ENCODE measurements at regions of chr7 and their contacts with region 1.

Region 1: DNA sequence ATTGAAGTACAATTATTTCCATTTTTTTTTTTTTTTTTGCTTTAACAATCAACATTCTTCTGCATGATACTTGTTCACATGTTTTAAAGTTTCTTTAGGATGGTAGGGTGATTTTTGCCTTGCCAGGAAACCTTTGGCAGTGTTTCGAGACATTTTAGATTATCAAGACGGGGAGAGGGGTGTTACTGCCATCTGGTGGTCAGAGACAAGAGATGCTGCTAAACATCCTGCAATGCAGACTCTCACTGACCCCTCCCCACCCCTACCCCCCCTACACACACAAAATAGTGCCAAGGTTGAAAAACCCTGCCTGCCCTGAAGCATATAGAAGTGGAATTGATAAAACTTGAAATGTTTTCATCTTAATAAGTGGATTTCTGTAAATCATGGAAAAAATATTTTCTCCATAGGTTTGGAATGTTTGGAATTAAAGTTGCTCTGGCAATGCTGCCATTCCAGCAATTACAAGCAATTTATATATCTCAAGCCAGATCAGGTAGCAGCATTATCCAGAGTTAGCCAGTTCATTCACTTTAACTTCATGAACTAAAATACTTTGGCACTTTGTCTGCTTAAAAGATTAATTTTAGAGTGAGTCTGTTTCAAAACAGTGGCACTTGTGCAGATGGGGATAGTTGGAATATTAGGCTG is 62.1 kb downstream of the SDHAF3 start:
- DNase-seq: peak in 4 of 10 donors; percentile 19 to 38 (median 26)

Region 2: GRCh38 chr7:97104719-97105238 is 74.8 kb before region 1 on chr7:
- intact Hi-C with region 1: loop called (anchors 1 kb)
- DNase-seq: peak; percentile 38 to 96 (median 82)

Region 3: DNA sequence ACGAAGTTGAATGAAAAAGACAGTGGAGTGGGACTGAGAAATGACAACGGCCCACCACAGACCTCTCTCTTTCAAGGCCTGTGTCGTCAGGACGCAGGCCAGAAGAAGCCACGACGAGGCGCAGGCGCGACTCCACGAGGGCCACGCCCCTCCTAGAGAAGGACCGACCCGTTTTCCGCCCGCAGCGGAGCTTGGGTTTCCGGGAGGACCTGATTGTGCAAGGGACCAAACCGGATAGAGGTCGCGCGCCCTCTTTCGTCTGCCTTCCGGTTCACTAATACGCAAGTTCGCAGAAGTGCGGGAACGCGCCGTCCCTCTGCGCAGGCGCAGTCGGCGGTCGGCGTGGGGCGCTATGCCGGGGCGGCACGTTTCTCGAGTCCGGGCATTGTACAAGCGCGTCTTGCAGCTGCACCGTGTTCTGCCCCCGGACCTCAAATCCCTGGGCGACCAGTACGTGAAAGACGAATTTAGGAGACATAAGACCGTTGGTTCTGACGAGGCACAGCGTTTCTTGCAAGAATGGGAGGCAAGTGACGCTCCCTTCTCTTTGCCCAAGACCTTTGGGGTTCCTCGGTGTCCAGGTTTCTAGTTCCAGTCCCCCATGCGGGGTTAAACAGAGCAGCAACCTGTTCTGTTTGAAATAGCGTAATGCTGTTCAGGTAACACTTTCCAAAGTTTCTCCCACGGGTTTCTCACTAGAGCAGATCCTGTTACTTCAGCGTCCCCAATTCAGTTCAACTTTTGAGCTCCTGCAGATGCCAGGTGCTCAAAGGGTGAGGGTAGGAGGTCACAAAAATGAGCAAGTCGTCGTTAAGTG is 62.0 kb before region 1 on chr7 and contains the start of gene SDHAF3:
- intact Hi-C with region 1: no loop called
- DNase-seq: peak; percentile 92 to 99 (median 95)

Measured in posterior cingulate gyrus (tissue), 11 donors.